Spleen (tissue), 13 donors: ENCODE measurements at regions of chr1 and their contacts with region 1.

Region 1: DNA sequence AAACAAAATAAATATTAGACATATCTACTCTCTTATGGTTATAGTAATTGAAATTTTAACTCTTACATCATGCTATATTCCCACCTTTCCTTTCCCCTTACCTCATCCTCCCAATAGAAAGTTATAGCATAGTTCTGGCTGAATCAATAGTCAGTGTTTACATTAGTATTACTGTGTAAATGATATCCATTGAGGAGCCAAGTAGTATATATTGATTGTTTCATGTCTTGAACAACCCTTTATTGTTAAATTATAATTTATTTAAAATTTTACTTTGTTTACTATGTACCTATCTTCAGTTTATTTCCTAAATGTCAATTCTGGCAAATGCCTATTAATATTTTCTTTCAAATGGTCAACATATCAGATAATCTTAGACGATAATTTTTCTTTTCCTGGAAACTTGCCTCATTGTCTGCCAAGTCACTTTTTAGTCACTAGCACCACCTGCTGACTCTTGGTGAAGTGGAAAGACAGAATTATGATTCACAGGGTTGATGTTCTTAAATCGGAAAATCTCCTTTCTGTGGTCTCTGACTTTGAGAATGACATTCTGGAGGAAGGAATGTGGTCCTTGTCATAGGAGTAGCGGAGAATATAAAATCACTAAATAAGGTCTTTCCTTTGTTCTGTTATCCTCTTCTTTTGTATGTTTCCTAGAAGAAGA is 8.7 kb downstream of the HJV start:
- DNase-seq: no peak
- H3K4me3 ChIP-seq: no peak overlapping the region
- H3K27ac ChIP-seq: peak overlapping the region in 1 of 8 donors; percentile 10
- H3K4me1 ChIP-seq: peaks cover 2 to 45% (median 13%) of the 10 kb centered on the region in 6 donors
- H3K27me3 ChIP-seq: peaks cover 0 to under 1% (median 0%) of the 10 kb centered on the region in 7 donors
- CTCF ChIP-seq: peak; percentile 50 to 90 (median 74)
- POLR2A ChIP-seq: no peak

Region 2: DNA sequence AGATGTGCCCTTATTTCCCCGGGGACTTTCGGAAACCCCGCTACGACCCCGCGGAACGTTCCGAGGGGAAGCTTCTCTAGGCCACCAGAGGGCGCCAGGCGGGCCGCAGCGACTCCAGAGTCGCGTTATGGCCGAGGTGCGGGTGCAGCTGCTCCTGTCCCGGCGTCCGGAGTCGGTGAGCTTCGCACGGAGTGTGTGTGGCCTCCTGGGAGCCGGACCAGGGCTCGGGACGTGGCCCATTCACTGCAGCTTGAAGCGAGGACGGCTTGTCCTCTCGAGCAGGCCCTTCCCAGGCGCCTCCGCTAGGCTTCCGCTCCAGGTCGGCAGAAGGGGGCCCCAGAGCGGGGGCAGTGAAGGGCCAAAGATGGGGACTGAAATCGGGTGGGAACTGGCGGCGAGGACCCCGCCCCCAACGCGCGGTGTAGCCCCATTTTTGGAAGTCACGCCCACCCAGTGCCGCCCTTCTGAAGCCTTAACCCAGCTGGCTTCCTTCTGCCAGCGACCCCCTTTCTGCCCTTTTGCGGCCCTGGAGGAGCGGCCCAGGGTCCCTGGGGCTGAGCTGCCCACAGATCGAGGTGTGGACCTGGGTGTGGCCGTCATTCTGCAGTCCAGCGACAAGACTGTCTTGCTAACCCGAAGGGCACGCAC is 167.2 kb before region 1 on chr1 and contains the start of gene NUDT17:
- intact Hi-C with region 1: loop called (anchors 5 kb)
- DNase-seq: peak; percentile 95
- H3K4me3 ChIP-seq: peak within 1 kb of the TSS; percentile 42 to 75 (median 54)
- H3K27ac ChIP-seq: peak within 1 kb of the TSS; percentile 73 to 90 (median 86)
- H3K4me1 ChIP-seq: peaks cover 10 to 27% (median 20%) of the 10 kb centered on the region in 6 donors
- H3K27me3 ChIP-seq: no peaks in the 10 kb centered on the region
- CTCF ChIP-seq: peak; percentile 73 to 93 (median 88)
- POLR2A ChIP-seq: no peak
- total RNA-seq, gene NUDT17: 4.3 to 7.5 (median 5.4) TPM

Region 3: DNA sequence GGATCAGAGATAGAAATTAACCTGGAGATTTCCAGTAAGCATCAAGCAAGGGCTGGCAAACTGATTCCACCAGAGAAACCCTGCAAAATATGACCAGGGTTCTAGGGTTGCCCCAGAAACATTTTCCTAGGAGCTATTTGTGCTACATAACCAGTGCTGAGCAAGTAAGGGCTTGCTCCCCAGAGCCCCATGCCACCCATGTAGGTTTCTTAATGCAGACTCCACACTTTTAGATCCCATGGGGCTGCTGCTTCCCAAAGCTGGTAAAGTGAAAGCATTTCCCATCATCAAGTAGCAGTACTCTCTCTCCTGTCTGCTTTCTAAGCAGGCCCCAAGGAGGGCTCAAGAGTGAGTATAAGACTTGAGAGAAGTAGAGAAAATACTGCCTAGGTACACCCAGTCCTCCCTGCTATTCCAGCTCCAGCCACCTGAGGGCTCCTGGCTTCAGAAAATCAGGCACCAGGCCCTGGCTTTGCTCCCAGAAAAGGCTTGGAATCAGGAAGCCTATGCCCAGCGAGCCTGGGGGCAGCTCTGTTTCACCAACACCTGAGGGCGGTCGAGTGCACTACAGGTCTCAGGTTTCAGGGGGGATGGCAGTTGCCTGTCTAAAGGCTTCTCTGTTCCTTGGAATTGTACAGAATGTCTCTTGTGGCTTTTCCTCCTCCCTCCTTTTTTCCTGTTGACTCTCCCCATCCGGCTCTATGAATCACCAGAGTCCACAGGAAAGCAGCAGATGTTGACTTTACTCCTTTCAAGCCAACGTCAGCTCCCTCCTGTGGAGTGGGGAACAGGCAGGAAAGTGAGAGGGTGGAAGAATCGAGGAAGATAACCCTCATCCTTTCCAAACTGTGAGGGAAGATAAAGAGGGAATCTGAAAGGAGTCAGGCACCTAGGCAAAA is 121.0 kb before region 1 on chr1:
- intact Hi-C with region 1: loop called (anchors 5 kb)
- DNase-seq: peak; percentile 87
- H3K4me3 ChIP-seq: no peak overlapping the region
- H3K27ac ChIP-seq: peak overlapping the region; percentile 44 to 80 (median 72)
- H3K4me1 ChIP-seq: peaks cover 0 to 27% (median 15%) of the 10 kb centered on the region in 6 donors
- H3K27me3 ChIP-seq: no peaks in the 10 kb centered on the region
- CTCF ChIP-seq: peak; percentile 76 to 91 (median 85)
- POLR2A ChIP-seq: no peak

Region 4: GRCh38 chr1:145978854-145979759 is 33.8 kb before region 1 on chr1:
- intact Hi-C with region 1: loop called (anchors 5 kb)
- DNase-seq: peak; percentile 92
- H3K4me3 ChIP-seq: peak overlapping the region in 6 of 8 donors; percentile 2 to 61 (median 18)
- H3K27ac ChIP-seq: peak overlapping the region; percentile 94 to 100 (median 99)
- H3K4me1 ChIP-seq: peaks cover 61 to 74% (median 72%) of the 10 kb centered on the region in 6 donors
- H3K27me3 ChIP-seq: no peaks in the 10 kb centered on the region
- CTCF ChIP-seq: peak in 6 of 11 experiments; percentile 5 to 31 (median 24)
- POLR2A ChIP-seq: peak; percentile 28 to 65 (median 53)